Cardiac septum (tissue), 1 donor: ENCODE measurements at regions of chr14 and their contacts with region 1.

Region 1: GRCh38 chr14:75176142-75176820 is at the start of gene TMED10:
- DNase-seq: peak; percentile 94
- total RNA-seq, gene TMED10: 283 TPM

Region 2: DNA sequence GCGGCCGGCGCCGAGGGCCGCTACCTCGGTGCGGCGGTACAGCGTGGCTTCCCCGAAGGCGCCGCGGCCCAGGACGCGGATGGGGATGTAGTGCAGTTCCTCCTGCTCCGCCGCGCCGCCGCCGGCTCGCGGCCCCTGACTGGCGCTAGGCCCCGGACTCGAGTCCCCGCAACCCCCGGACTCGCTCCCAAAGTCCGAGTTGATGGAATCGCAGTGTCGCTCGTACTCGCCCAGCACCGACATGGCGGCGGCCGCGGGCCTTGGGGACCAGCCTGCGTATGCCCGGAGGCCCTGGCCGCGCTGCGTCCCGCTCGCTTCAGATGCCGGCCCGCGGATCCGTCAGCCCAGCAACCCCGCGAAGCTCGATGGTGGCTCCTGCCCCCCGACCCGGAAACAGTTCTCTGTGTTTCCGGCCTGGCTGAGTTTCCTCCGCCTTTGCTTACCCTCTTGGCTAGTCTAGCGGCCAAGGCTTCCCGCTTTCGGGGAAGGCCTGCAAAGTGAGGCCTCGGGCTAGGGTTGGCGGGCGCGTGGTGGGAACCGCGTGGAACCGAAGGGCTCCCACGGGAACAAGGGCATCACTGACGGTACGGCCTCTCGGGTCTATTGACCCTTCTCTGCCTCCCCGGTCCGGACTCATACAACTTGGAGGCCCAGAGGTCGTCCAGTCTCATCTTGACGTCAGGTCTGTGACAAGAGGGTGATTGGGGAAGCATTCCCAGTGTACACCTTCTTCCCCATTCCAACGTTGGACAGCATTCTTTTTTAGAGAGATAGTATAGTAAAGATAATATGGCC is 49.4 kb before region 1 on chr14 and contains the start of gene NEK9:
- intact Hi-C with region 1: loop called (anchors 5 kb)
- DNase-seq: peak; percentile 95
- total RNA-seq, gene NEK9: 115 TPM

Region 3: DNA sequence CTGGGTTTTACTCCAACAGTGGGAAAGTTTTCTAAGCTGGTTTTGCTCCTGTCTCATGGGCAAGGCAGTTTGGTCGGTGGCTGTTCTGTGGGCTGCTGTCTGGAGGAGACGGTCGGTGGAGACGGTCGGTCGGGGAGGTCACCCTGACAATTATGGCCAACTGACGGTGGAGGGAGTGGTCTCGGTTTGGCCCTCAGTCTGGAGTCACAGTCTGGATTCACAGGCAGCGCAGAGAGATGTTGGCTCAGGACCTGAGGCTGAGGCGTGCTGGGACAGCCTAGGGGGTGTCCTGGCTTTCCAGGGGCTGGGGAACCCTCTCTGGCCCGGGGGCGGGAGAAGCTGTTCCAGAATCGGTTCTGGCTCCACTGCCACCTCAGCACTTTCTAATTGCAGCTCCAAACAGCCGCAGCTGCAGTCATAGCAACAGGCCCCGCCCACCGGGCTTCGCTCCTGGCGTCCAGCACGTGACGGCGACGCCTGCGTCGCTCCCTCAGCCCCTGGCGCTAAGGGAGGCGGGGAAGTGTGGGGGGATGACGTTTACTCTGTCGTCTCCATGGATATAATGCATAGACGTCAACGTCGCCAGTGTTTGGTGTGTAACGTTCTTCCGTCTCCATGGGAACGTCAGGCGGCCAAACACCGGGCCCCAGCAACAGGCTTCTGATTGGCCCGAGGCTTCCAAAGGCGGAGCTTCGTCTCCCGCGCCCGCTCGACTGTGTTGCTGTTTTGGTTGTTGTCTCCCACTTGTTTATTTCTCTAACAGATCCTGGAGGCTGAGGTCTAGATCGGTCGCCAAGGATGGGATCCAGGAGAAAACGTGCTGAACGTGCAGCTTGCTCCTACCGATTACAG is 82.6 kb after region 1 on chr14:
- intact Hi-C with region 1: loop called (anchors 2 kb)
- DNase-seq: peak; percentile 100